ENCODE measurements at regions of chr10 and their contacts with region 1.

Region 1: DNA sequence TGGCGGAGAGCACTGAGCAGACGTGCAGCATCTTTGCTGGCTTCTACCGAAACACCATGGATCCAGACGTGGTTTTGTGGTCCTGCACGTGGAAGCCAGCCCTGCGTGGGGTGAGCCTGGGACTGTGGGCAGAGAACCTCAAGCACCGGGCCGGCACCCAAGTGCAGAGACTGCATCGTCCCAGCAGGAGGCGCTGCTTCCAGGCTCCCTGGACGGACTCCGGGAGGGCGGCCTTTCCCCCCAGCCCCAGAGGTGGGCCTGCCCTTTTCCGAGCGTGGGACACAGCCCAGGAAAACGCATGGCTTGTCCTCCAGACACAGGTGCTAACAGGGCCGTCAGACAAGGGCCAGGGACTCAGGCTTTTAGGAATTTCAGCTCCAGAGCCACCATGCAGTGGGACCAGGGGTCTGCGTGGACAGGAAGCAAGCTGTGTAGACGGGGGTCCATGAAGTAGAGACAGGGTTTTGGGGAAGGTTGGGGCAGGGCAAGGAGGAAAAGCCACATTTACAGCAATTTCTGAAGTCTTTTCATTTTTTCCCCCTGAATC is 303.9 kb downstream of the WDR37 start:
- DNase-seq: peak; percentile 58
- H3K4me3 ChIP-seq: no peak overlapping the region
- H3K27ac ChIP-seq: no peak overlapping the region; a peak in 1 of 4 replicates
- H3K4me1 ChIP-seq: peaks cover 0 to 28% of the 10 kb centered on the region in 2 experiments; a peak in 2 of 4 replicates
- H3K27me3 ChIP-seq: no peaks in the 10 kb centered on the region
- CTCF ChIP-seq: no peak
- EP300 ChIP-seq: no peak
- RAD21 ChIP-seq: no peak

Region 2: DNA sequence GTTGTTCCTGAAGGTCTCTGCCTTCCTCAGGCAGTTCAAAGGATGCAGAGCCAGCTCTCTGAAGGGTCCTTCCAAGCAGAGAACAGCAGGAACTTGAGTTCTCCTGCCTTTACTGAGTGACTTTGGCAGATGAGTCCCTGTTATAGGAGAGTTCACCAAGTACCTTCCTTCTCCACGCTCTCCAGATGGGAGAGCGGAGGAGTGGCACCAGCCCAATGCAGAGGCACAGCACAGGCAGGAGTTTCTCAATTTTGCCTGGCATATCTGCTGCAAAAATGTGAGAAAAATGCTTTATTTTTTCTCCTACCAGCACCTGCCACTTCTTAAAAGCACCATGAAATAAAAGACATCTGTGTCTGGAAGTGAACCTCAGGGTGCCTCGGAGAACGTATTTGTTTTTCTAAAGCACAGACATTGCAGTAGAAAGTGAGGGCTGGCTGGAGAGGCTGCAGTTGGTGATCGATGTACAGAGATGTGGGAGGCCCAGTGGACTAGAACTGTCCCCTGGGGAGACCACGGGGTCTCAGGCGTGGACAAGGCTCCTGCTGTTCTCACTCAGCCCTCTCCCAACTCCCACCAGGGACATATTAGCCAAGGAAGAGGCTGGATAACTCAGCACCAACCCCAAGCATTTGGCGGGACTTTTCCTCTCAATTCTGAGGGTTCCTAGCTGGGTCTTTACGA is 129.3 kb before region 1 on chr10:
- CTCF ChIA-PET with region 1: no interaction called
- POLR2A ChIA-PET with region 1: no interaction called
- DNase-seq: no peak
- H3K4me3 ChIP-seq: no peak overlapping the region
- H3K27ac ChIP-seq: no peak overlapping the region
- H3K4me1 ChIP-seq: no peaks in the 10 kb centered on the region
- H3K27me3 ChIP-seq: no peaks in the 10 kb centered on the region
- CTCF ChIP-seq: no peak
- EP300 ChIP-seq: no peak
- RAD21 ChIP-seq: no peak

Region 3: DNA sequence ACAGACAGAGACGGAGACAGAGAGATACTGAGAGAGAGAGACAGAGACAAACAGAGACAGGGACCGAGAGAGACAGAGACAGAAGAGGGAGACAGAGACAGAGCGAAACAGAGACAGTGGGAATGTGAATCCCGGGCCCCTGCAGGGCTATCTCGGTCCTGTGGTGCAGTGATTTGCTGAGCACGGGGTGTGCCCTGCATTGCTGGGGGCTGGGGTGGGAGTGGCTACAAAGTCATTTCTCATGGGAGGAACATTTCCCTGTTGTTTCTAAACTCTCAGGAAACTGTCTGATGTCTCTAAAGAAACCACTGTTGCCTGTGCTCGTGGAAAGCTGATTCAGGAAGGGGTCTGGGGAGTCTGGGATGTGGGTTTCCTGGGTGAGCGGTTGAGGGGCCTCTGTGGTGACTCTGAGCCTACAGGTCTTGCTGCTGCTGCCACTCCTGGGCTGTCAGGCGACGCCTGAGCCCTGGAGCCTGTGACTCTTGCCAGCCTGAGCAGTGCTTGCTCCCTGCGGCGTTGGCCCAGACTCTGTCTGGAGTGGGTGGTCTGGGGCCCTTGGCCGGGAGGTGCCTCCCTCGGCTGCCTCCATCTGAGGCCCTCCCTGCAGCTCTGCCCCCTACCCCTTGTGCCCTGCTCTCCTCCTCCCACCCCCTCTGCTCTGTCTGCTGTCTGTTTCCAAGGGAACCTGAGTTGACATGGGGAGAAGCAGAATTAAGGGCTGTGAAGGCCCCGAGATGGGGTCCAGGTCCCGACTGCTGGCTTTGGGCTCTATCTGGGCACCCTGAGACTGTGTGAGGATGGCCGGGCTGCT is 11.9 kb before region 1 on chr10:
- CTCF ChIA-PET with region 1: interaction called, 10 read pairs
- POLR2A ChIA-PET with region 1: no interaction called
- DNase-seq: no peak
- H3K4me3 ChIP-seq: no peak overlapping the region
- H3K27ac ChIP-seq: no peak overlapping the region
- H3K4me1 ChIP-seq: peaks cover 0 to 15% of the 10 kb centered on the region in 2 experiments; a peak in 1 of 4 replicates
- H3K27me3 ChIP-seq: no peaks in the 10 kb centered on the region
- CTCF ChIP-seq: no peak
- EP300 ChIP-seq: no peak
- RAD21 ChIP-seq: no peak

Region 4: DNA sequence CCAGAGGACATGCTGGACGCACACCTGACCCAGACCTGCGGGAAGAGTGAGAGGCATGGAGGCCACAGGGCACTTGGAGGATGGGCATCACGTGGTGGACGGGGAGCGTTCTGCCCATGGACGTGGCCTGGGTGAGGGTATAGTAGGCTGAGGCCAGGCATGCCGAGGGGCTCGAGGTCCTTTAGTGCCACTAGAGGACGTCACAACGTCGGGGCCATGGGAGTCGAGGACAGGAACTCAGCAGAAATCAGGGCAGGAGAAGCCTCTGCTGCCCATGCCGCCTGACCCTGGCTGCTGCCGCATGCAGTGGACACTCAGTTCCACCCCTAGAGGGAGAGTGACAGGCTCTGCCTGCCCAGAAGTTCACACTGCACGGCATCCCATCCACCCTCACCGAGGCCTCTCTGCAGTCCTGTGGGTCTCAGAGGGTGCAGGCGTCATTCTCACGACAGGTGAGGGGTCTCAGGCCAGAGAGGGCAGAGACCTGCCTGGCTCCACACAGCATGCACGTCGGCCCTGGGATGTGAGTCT is 178.5 kb after region 1 on chr10:
- CTCF ChIA-PET with region 1: no interaction called
- POLR2A ChIA-PET with region 1: no interaction called
- DNase-seq: no peak
- H3K4me3 ChIP-seq: no peak overlapping the region
- H3K27ac ChIP-seq: no peak overlapping the region
- H3K4me1 ChIP-seq: no peaks in the 10 kb centered on the region
- H3K27me3 ChIP-seq: no peaks in the 10 kb centered on the region
- CTCF ChIP-seq: no peak
- EP300 ChIP-seq: no peak
- RAD21 ChIP-seq: no peak

Measured in SK-N-SH (cell line).